ENCODE measurements at regions of chr1 and their contacts with region 1.

Region 1: GRCh38 chr1:236893626-236894545 is 98.8 kb downstream of the MTR start:
- DNase-seq: peak in 2 of 5 donors; percentile 18 to 40
- ATAC-seq: no peak
- H3K4me3 ChIP-seq: no peak overlapping the region
- H3K27ac ChIP-seq: peak overlapping the region in 9 of 12 donors; percentile 54 to 92 (median 82)
- H3K4me1 ChIP-seq: peaks cover 0 to 73% (median 29%) of the 10 kb centered on the region in 12 donors
- H3K27me3 ChIP-seq: no peaks in the 10 kb centered on the region
- CTCF ChIP-seq: no peak
- POLR2A ChIP-seq: no peak

Region 2: DNA sequence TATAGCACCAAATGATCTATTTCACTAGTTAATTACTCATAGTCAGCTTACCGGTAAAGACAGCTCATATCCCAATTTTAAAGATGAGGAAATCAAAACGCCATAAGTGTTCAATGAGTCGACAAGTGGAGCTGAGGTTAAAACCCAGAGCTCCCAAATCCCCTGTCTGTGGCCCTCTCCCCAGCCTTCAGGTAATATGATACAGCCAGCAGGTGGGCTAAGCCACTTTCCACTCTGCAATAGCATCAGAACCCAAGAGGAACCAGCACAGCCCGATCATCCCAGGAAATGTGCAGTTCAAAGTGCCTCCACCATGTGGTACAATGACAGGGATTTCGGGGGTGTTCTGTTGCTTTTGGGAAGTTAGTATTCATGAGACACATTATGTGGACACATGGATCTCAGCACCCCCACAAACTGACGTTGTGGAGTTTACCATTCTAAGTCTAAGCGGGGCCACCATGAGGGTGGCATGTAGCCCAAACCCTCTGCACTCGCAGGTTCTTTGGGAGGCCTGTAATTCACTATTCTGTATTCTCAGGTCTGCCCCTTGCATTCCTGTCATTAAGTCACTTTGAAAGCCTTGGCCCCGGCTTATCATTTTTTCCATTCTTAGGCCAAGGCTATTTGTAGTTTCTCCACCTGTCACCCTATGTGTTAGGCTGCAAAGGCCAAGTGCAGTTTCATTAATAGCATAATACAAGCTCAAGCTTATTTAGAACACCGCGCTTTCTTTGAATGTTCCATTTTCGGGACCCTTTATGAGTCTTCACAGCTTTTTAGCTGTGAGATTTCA is 233.9 kb before region 1 on chr1:
- intact Hi-C with region 1: no loop called
- DNase-seq: peak in 1 of 5 donors; percentile 30
- ATAC-seq: peak; percentile 82 to 91 (median 86)
- H3K4me3 ChIP-seq: no peak overlapping the region
- H3K27ac ChIP-seq: peak overlapping the region in 8 of 12 donors; percentile 22 to 72 (median 61)
- H3K4me1 ChIP-seq: peaks cover 0 to 18% (median 1%) of the 10 kb centered on the region in 12 donors
- H3K27me3 ChIP-seq: no peaks in the 10 kb centered on the region
- CTCF ChIP-seq: no peak
- POLR2A ChIP-seq: no peak

Region 3: DNA sequence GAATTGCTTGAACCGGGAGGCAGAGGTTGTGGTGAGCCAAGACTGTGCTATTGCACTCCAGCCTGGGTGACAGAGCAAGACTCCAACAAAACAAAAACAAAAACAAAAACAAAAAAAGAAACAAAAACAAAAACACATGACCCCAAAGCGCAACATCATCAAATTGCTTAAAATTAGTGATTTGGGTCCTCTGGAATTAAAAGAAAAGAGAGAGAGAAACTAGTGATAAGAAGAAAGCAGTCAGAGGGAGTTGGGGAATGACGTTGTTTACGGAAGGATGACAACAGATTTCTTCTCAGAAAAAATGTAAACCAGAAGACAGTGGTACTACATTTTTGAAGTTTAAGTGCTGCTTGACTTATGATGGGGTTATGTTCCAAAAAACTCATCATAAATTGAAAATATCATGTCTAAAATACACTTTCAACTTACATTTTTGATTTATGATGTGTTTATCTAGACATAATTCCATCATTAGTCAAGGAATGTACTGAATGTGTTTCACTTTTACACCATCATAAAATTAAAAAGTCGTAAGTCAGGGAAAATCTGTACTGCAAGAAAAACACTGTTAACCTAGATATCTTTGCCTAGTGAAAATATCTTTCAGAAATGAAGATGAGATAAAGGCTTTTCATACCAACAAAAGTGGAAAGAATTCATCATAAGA is 22.4 kb after region 1 on chr1:
- intact Hi-C with region 1: loop called in 1 of 10 experiments (anchors 2 kb)
- DNase-seq: no peak
- ATAC-seq: no peak
- H3K4me3 ChIP-seq: no peak overlapping the region
- H3K27ac ChIP-seq: no peak overlapping the region
- H3K4me1 ChIP-seq: peaks cover 0 to 10% (median 0%) of the 10 kb centered on the region in 12 donors
- H3K27me3 ChIP-seq: no peaks in the 10 kb centered on the region
- CTCF ChIP-seq: no peak
- POLR2A ChIP-seq: no peak

Region 4: GRCh38 chr1:236978740-236979139 is 84.9 kb after region 1 on chr1:
- intact Hi-C with region 1: loop called in 1 of 10 experiments (anchors 5 kb)
- DNase-seq: peak in 1 of 5 donors; percentile 36
- ATAC-seq: peak in 3 of 4 donors; percentile 25 to 39 (median 36)
- H3K4me3 ChIP-seq: no peak overlapping the region
- H3K27ac ChIP-seq: peak overlapping the region in 8 of 12 donors; percentile 13 to 65 (median 44)
- H3K4me1 ChIP-seq: peaks cover 0 to 35% (median 7%) of the 10 kb centered on the region in 12 donors
- H3K27me3 ChIP-seq: no peaks in the 10 kb centered on the region
- CTCF ChIP-seq: no peak
- POLR2A ChIP-seq: no peak

Region 5: GRCh38 chr1:236997882-236998281 is 104.0 kb after region 1 on chr1:
- intact Hi-C with region 1: loop called in 6 of 10 experiments (anchors 1 to 10 kb)
- DNase-seq: peak; percentile 67 to 89 (median 74)
- ATAC-seq: peak; percentile 88 to 91 (median 90)
- H3K4me3 ChIP-seq: peak overlapping the region in 11 of 12 donors; percentile 7 to 47 (median 35)
- H3K27ac ChIP-seq: peak overlapping the region; percentile 76 to 99 (median 93)
- H3K4me1 ChIP-seq: peaks cover 0 to 25% (median 0%) of the 10 kb centered on the region in 12 donors
- H3K27me3 ChIP-seq: no peaks in the 10 kb centered on the region
- CTCF ChIP-seq: peak in 4 of 12 donors; percentile 2 to 28 (median 16)
- POLR2A ChIP-seq: peak in 1 of 2 donors; percentile 57

Region 6: DNA sequence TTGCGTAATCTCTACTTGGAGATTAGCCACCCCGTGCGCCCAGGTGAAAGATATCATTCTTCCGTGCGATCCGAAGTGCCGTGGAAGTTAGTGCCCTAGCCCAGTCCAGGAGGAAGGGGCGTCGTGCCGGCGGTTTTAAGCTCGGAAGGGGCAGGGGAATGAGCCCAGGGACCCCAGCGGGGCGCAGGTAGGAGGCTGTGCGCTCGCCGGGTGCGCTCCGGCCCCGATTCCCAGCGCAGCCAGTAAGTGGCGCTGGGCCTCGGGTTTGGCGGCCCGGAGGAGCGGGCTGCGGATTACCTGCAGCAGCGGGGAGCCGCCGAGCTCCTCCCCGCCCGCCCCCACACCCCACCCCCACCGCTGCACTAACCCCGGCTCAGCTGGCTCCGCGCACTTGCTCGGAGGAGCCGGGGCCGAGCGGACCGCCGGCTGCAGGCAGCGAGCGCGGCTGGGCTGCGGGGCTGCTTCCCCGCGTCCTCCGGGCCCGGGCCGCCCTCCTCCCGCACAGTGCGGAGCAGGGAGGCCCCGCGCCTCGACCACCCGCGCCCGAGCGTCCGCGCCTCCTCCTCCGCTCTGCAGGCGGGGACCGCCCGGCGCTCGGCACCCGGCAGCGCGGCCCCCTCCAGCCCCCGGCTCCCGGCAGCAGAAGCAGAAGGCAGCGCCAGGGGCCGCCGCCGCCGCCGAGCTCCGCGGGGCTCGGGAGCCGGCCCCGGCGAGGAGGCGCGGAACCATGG is 148.1 kb after region 1 on chr1 and contains the start of gene RYR2:
- intact Hi-C with region 1: loop called in 6 of 10 experiments (anchors 2 to 10 kb)
- DNase-seq: peak; percentile 48 to 72 (median 70)
- ATAC-seq: peak; percentile 29 to 73 (median 66)
- H3K4me3 ChIP-seq: peak within 1 kb of the TSS; percentile 54 to 85 (median 72)
- H3K27ac ChIP-seq: peak within 1 kb of the TSS; percentile 82 to 99 (median 96)
- H3K4me1 ChIP-seq: peaks cover 0 to 8% (median 0%) of the 10 kb centered on the region in 12 donors
- H3K27me3 ChIP-seq: peaks cover 0 to 54% (median 11%) of the 10 kb centered on the region in 9 donors
- CTCF ChIP-seq: peak; percentile 27 to 70 (median 57)
- POLR2A ChIP-seq: peak; percentile 69 to 80
- total RNA-seq, gene RYR2: 408 to 1,319 (median 822) TPM